ENCODE measurements at regions of chr1 and their contacts with region 1.

Region 1: DNA sequence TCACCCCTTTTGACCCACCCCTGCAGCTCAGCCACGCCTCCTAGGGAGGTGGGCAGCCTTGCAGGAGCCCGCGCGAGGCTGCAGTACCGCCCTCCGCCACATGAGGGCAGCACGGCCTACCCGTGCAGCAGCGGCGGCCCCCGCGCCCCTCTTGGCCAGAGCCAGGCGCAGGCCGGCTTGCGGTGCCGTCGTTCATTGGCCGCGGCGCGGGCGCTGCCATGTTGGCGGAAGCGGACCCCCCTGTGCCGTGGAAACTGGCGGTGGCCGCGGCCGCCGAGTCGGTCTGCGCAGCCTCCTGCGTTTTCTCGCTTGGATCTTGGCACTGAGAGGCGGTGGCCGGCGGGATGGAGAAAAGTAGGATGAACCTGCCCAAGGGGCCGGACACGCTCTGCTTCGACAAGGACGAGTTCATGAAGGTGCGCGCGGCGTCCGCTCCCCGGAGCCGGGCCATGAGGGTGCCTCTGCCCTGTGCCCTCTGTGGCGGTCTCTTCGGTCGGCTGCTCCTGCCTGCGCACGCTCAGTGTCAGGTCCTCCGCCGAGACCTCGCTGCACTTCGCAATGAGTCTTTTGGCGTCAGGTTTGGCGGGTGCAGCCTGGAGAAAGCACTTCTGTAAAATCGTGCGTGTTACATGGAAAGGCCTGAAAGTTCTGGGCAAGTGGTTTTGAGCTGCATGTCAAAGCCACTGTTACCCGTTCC is at the start of gene COG2:
- DNase-seq: peak; percentile 96
- ATAC-seq: peak; percentile 87
- H3K4me3 ChIP-seq: peak within 1 kb of the TSS; percentile 58 to 93 (median 87)
- H3K4me3 Mint-ChIP-seq: peak within 1 kb of the TSS; percentile 99
- H3K27ac ChIP-seq: peak within 1 kb of the TSS; percentile 72
- H3K27ac Mint-ChIP-seq: peak within 1 kb of the TSS; percentile 98
- H3K4me1 ChIP-seq: peaks cover 28 to 35% of the 10 kb centered on the region in 2 donors
- H3K4me1 Mint-ChIP-seq: peaks cover 53% of the 10 kb centered on the region
- H3K27me3 ChIP-seq: peaks cover 0 to 10% (median 0%) of the 10 kb centered on the region in 4 experiments
- H3K27me3 Mint-ChIP-seq: peaks cover 23% of the 10 kb centered on the region
- CTCF ChIP-seq: peak; percentile 100
- total RNA-seq, gene COG2: 36.9 and 42.5 TPM in 2 replicates

Region 2: GRCh38 chr1:229507951-229508822 is 1134.2 kb before region 1 on chr1 and contains the start of gene NUP133:
- CTCF ChIA-PET with region 1: no interaction called
- POLR2A ChIA-PET with region 1: no interaction called
- intact Hi-C with region 1: loop called (anchors 5 kb)
- DNase-seq: peak; percentile 99
- ATAC-seq: peak; percentile 95
- H3K4me3 ChIP-seq: peak within 1 kb of the TSS; percentile 87 to 99 (median 92)
- H3K4me3 Mint-ChIP-seq: peak within 1 kb of the TSS; percentile 96
- H3K27ac ChIP-seq: peak within 1 kb of the TSS; percentile 93 to 94
- H3K27ac Mint-ChIP-seq: peak within 1 kb of the TSS; percentile 99
- H3K4me1 ChIP-seq: peaks cover 14 to 17% of the 10 kb centered on the region in 2 donors
- H3K4me1 Mint-ChIP-seq: peaks cover 23% of the 10 kb centered on the region
- H3K27me3 ChIP-seq: no peaks in the 10 kb centered on the region
- H3K27me3 Mint-ChIP-seq: no peaks in the 10 kb centered on the region
- CTCF ChIP-seq: no peak
- total RNA-seq, gene NUP133: 49.7 and 50.5 TPM in 2 replicates

Region 3: DNA sequence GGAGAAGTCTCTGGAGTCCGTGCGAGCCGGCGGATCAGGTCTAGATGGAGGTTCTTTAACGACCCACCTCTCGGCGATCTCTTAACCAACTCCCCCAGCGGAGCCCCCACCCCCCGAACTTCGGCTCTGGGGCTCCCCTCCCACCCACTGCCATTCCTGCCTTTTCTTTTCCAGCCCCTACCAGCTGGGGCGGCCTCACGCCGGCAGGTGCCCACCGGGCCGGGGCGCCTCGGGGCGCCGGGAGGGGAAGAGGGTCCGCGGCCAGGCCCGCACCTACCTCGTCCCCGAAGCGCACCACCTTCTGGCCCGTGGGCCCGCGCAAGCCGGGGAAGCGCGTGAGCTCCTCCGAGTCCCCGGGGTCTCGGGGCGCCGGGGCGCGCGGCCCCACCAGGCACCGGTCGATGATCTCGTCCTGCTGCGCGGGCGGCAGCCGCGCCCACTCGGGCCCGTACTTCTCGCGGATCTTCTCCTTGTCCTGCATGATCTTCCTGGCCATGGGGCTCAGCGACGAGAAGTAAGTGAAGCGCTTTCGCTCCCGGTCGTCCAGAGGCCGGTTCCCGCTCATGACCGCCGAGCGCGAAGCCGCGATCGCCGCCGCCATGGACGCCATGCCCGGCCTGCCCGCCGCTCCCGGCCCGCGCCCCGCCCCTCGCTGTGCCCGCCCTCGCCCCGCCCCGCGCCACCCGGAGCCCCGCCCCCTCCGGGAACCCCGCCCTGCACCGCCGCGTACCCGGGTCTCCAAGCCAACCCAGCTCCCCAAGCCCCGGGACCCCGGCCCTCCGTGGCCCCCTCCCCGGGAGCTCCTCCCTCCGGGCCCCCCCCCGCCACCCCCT is 225.7 kb after region 1 on chr1 and contains the start of gene C1orf198:
- CTCF ChIA-PET with region 1: no interaction called
- POLR2A ChIA-PET with region 1: interaction called, 6 read pairs
- intact Hi-C with region 1: loop called (anchors 1 kb)
- DNase-seq: peak; percentile 85
- ATAC-seq: peak; percentile 96
- H3K4me3 ChIP-seq: peak within 1 kb of the TSS; percentile 25 to 87 (median 76)
- H3K4me3 Mint-ChIP-seq: peak within 1 kb of the TSS; percentile 90
- H3K27ac ChIP-seq: peak within 1 kb of the TSS in 1 of 2 donors; percentile 50
- H3K27ac Mint-ChIP-seq: peak within 1 kb of the TSS; percentile 72
- H3K4me1 ChIP-seq: peaks cover 13 to 16% of the 10 kb centered on the region in 2 donors
- H3K4me1 Mint-ChIP-seq: peaks cover 17% of the 10 kb centered on the region
- H3K27me3 ChIP-seq: peaks cover 0 to 24% (median 17%) of the 10 kb centered on the region in 4 experiments
- H3K27me3 Mint-ChIP-seq: peaks cover 37% of the 10 kb centered on the region
- CTCF ChIP-seq: no peak
- total RNA-seq, gene C1orf198: 6.6 TPM in 2 replicates

Region 4: GRCh38 chr1:231211005-231211857 is 568.8 kb after region 1 on chr1:
- CTCF ChIA-PET with region 1: interaction called, 4 read pairs
- POLR2A ChIA-PET with region 1: no interaction called
- intact Hi-C with region 1: loop called (anchors 1 kb)
- DNase-seq: peak; percentile 94
- ATAC-seq: peak; percentile 93
- H3K4me3 ChIP-seq: peak overlapping the region; percentile 21 to 67 (median 37)
- H3K4me3 Mint-ChIP-seq: peak overlapping the region; percentile 88
- H3K27ac ChIP-seq: peak overlapping the region; percentile 59 to 65
- H3K27ac Mint-ChIP-seq: peak overlapping the region; percentile 88
- H3K4me1 ChIP-seq: peaks cover 22 to 29% of the 10 kb centered on the region in 2 donors
- H3K4me1 Mint-ChIP-seq: peaks cover 31% of the 10 kb centered on the region
- H3K27me3 ChIP-seq: no peaks in the 10 kb centered on the region
- H3K27me3 Mint-ChIP-seq: no peaks in the 10 kb centered on the region
- CTCF ChIP-seq: peak; percentile 93

Region 5: DNA sequence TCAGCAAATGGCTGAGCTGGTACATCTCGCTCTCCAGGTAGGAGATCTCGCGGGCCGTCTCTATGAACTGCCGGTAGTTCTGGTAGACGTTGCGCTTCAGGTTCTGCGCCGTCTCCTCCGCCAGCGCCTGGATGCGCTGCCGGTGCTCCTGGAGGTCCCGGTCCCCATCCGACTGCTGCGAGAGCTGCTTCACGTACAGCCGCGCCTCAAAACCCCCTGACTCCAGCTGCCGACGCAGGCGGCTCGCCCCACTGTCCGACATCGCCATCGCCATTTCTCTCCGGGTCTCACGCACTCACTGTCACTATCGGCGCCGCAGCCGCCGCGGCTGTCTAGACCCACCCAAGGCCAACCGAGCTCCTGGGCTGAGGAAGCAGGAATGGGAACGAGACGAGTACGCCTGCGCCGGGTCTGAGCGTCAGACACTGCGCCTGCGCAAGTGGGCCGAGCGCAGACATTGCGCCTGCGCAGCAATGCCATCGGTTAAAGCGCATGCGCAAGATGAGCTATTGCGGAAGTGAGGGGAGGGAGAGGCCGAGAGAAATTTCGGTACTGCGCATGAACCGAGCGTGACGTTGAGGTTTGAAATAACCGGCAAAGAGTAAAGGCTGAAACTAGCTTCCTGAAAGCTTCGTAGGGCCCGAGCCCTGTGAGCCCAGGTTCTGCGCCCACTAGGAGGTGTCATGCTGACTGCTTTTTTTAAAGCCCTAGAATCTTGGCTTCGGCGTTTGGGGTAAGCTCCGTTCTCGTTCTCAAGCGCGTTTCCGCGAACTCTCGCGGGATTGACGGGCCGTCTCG is 695.3 kb after region 1 on chr1 and contains the start of gene EXOC8:
- CTCF ChIA-PET with region 1: no interaction called
- POLR2A ChIA-PET with region 1: no interaction called
- intact Hi-C with region 1: loop called (anchors 1 kb)
- DNase-seq: peak; percentile 99
- ATAC-seq: peak; percentile 83
- H3K4me3 ChIP-seq: peak within 1 kb of the TSS; percentile 68 to 96 (median 94)
- H3K4me3 Mint-ChIP-seq: peak within 1 kb of the TSS; percentile 99
- H3K27ac ChIP-seq: peak within 1 kb of the TSS; percentile 93 to 99
- H3K27ac Mint-ChIP-seq: peak within 1 kb of the TSS; percentile 100
- H3K4me1 ChIP-seq: peaks cover 46 to 54% of the 10 kb centered on the region in 2 donors
- H3K4me1 Mint-ChIP-seq: peaks cover 59% of the 10 kb centered on the region
- H3K27me3 ChIP-seq: no peaks in the 10 kb centered on the region
- H3K27me3 Mint-ChIP-seq: peaks cover 3% of the 10 kb centered on the region
- CTCF ChIP-seq: no peak
- total RNA-seq, gene EXOC8: 32.5 and 32.6 TPM in 2 replicates